Endothelial cell of umbilical vein (primary cell): ENCODE measurements at regions of chr2 and their contacts with region 1.

Region 1: GRCh38 chr2:212032032-212032431 is 506.6 kb downstream of the ERBB4 start:
- DNase-seq: peak; percentile 53
- H3K4me3 ChIP-seq: no peak overlapping the region
- H3K27ac ChIP-seq: peak overlapping the region; percentile 82
- H3K4me1 ChIP-seq: peaks cover 61% of the 10 kb centered on the region
- H3K27me3 ChIP-seq: no peaks in the 10 kb centered on the region
- CTCF ChIP-seq: no peak
- POLR2A ChIP-seq: no peak

Region 2: DNA sequence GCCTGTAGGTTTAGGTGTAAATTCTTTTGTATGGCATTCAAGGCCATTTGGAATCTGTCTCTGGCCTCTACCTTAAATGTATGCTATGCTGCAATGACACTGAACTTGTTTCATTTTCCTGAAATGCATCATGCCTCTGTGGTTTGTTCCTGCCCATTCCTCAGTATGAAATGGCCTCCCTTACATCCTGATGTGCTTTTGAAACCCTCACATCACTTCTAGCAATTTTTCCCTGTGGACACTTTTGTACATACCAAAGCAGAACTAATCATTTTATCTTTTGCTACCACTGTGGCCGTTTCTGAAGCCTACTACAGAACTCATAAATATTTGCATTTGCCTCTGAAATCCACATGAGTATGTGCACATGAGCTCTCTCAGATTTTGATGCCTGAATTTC is 50.6 kb before region 1 on chr2:
- CTCF ChIA-PET with region 1: no interaction called
- POLR2A ChIA-PET with region 1: no interaction called
- dilution Hi-C with region 1: no loop called
- intact Hi-C with region 1: loop called (anchors 2 kb)
- DNase-seq: peak; percentile 24
- H3K4me3 ChIP-seq: no peak overlapping the region
- H3K27ac ChIP-seq: peak overlapping the region; percentile 41
- H3K4me1 ChIP-seq: peaks cover 7% of the 10 kb centered on the region
- H3K27me3 ChIP-seq: no peaks in the 10 kb centered on the region
- CTCF ChIP-seq: no peak
- POLR2A ChIP-seq: no peak

Region 3: GRCh38 chr2:212052412-212053159 is 20.6 kb after region 1 on chr2:
- CTCF ChIA-PET with region 1: interaction called, 3 read pairs
- POLR2A ChIA-PET with region 1: no interaction called
- dilution Hi-C with region 1: no loop called
- intact Hi-C with region 1: loop called (anchors 1 kb)
- DNase-seq: peak; percentile 78
- H3K4me3 ChIP-seq: no peak overlapping the region
- H3K27ac ChIP-seq: peak overlapping the region; percentile 95
- H3K4me1 ChIP-seq: peaks cover 6% of the 10 kb centered on the region
- H3K27me3 ChIP-seq: no peaks in the 10 kb centered on the region
- CTCF ChIP-seq: no peak
- POLR2A ChIP-seq: no peak

Region 4: GRCh38 chr2:212109792-212110680 is 78.0 kb after region 1 on chr2:
- CTCF ChIA-PET with region 1: interaction called, 3 read pairs
- POLR2A ChIA-PET with region 1: no interaction called
- dilution Hi-C with region 1: no loop called
- intact Hi-C with region 1: loop called (anchors 2 kb)
- DNase-seq: peak; percentile 92
- H3K4me3 ChIP-seq: peak overlapping the region in 1 of 3 experiments; percentile 5
- H3K27ac ChIP-seq: peak overlapping the region; percentile 20
- H3K4me1 ChIP-seq: peaks cover 26% of the 10 kb centered on the region
- H3K27me3 ChIP-seq: no peaks in the 10 kb centered on the region
- CTCF ChIP-seq: no peak
- POLR2A ChIP-seq: no peak

Region 5: GRCh38 chr2:212536817-212537725 is 505.0 kb after region 1 on chr2:
- CTCF ChIA-PET with region 1: no interaction called
- POLR2A ChIA-PET with region 1: no interaction called
- dilution Hi-C with region 1: no loop called
- intact Hi-C with region 1: loop called (anchors 5 kb)
- DNase-seq: peak; percentile 20
- H3K4me3 ChIP-seq: peak overlapping the region; percentile 39 to 88 (median 86)
- H3K27ac ChIP-seq: no peak overlapping the region
- H3K4me1 ChIP-seq: peaks cover 18% of the 10 kb centered on the region
- H3K27me3 ChIP-seq: peaks cover 14 to 31% of the 10 kb centered on the region in 2 experiments
- CTCF ChIP-seq: no peak
- POLR2A ChIP-seq: no peak